Aorta (tissue), 5 donors: ENCODE measurements at regions of chr10 and their contacts with region 1.

Region 1: DNA sequence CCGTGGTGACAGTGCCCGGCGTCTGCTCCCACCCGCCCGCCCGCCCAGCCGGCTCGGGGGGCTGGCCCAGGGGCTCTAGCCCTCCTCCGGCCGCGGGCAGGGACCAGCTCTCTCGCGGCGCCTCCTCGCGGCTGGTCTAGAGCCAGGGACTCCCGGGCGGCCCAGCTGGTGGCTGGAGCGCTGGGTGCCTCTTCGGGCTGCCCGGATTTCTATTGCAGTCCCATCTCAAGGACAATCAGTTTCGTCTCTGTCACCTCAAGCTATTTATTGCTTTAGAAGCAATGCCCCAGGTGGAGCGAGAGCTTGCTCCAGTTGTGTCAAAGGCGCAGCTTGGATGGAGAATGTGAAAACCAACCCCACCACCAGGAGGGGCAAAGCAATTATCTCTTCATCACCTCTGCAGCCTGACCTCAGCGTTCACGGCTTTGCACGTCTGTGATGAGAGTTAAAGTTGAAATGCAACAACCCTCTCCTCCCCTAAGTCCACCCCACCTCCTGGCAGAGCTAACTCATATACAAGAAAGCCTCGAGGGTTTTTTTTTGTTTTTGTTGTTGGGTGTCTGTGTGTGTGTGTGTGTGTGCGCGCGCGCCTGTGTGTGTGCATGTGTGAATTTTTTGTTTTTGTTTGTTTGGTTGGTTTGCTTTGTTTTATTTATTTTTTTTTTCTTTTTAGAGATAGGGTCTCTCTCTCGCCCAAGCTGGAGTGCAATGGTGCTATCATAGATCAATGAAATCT is at the start of gene ITGA8:
- DNase-seq: peak; percentile 81 to 90
- ATAC-seq: peak; percentile 86
- H3K4me3 ChIP-seq: peak within 1 kb of the TSS; percentile 95
- H3K27ac ChIP-seq: peak within 1 kb of the TSS; percentile 48 to 61
- H3K4me1 ChIP-seq: peaks cover 0 to 8% of the 10 kb centered on the region in 2 donors
- H3K27me3 ChIP-seq: no peaks in the 10 kb centered on the region
- total RNA-seq, gene ITGA8: 516 to 885 TPM

Region 2: GRCh38 chr10:15433850-15434537 is 286.1 kb before region 1 on chr10:
- intact Hi-C with region 1: loop called (anchors 5 kb)
- DNase-seq: no peak
- ATAC-seq: peak; percentile 68
- H3K4me3 ChIP-seq: peak overlapping the region; percentile 24 to 56
- H3K27ac ChIP-seq: peak overlapping the region in 1 of 2 donors; percentile 87
- H3K4me1 ChIP-seq: peaks cover 0 to 2% of the 10 kb centered on the region in 2 donors
- H3K27me3 ChIP-seq: no peaks in the 10 kb centered on the region

Region 3: GRCh38 chr10:15485684-15486316 is 234.3 kb before region 1 on chr10:
- intact Hi-C with region 1: loop called in 1 of 2 experiments (anchors 2 kb)
- DNase-seq: peak in 1 of 2 donors; percentile 86
- ATAC-seq: peak; percentile 91
- H3K4me3 ChIP-seq: no peak overlapping the region
- H3K27ac ChIP-seq: peak overlapping the region; percentile 90 to 95
- H3K4me1 ChIP-seq: peaks cover 5 to 6% of the 10 kb centered on the region in 2 donors
- H3K27me3 ChIP-seq: no peaks in the 10 kb centered on the region

Region 4: DNA sequence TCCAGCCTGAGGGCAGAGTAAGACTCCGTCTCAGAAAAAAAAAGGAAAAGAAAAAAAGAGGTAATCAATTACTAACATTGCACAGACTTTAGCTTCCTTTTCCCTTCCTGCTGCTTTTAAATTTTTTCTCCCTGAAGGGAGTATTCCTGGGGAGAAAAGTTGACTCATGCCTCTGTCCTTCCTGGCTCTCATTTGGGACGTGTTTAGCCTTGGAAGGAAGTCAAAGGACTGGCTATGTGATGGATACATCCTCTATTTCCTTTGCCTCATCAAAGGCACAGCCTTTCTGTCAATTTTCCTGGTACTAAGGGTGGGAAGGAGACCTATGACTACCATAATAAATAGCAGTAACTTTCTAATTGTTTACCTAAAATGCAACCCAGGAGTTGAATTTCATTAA is 78.0 kb before region 1 on chr10:
- intact Hi-C with region 1: loop called in 1 of 2 experiments (anchors 10 kb)
- DNase-seq: no peak
- ATAC-seq: no peak
- H3K4me3 ChIP-seq: no peak overlapping the region
- H3K27ac ChIP-seq: no peak overlapping the region
- H3K4me1 ChIP-seq: peaks cover 2 to 6% of the 10 kb centered on the region in 2 donors
- H3K27me3 ChIP-seq: no peaks in the 10 kb centered on the region

Region 5: GRCh38 chr10:15672469-15672868 is 47.6 kb before region 1 on chr10:
- intact Hi-C with region 1: no loop called
- DNase-seq: no peak
- ATAC-seq: no peak
- H3K4me3 ChIP-seq: no peak overlapping the region
- H3K27ac ChIP-seq: no peak overlapping the region
- H3K4me1 ChIP-seq: peaks cover 3 to 6% of the 10 kb centered on the region in 2 donors
- H3K27me3 ChIP-seq: no peaks in the 10 kb centered on the region

Region 6: GRCh38 chr10:15824498-15824897 is 104.4 kb after region 1 on chr10:
- intact Hi-C with region 1: loop called (anchors 2 to 5 kb)
- DNase-seq: no peak
- ATAC-seq: no peak
- H3K4me3 ChIP-seq: no peak overlapping the region
- H3K27ac ChIP-seq: no peak overlapping the region
- H3K4me1 ChIP-seq: peaks cover 0 to 4% of the 10 kb centered on the region in 2 donors
- H3K27me3 ChIP-seq: no peaks in the 10 kb centered on the region